ENCODE measurements at regions of chr1 and their contacts with region 1.

Region 1: GRCh38 chr1:181905944-181906597 is 155.4 kb downstream of the ZNF648 start:
- DNase-seq: no peak
- ATAC-seq: no peak
- H3K4me3 ChIP-seq: no peak overlapping the region
- H3K27ac ChIP-seq: no peak overlapping the region
- H3K4me1 ChIP-seq: no peaks in the 10 kb centered on the region
- H3K27me3 ChIP-seq: peaks cover 0 to 7% of the 10 kb centered on the region in 2 experiments; a peak in 1 of 4 replicates
- CTCF ChIP-seq: no peak
- EP300 ChIP-seq: no peak
- POLR2A ChIP-seq: no peak
- RAD21 ChIP-seq: no peak

Region 2: GRCh38 chr1:181743878-181744312 is 162.2 kb before region 1 on chr1:
- CTCF ChIA-PET with region 1: no interaction called
- POLR2A ChIA-PET with region 1: no interaction called
- RAD21 ChIA-PET with region 1: no interaction called
- SMC1A ChIA-PET with region 1: no interaction called
- in situ Hi-C with region 1: no loop called
- intact Hi-C with region 1: no loop called
- DNase-seq: no peak
- ATAC-seq: no peak
- H3K4me3 ChIP-seq: no peak overlapping the region
- H3K27ac ChIP-seq: no peak overlapping the region
- H3K4me1 ChIP-seq: no peaks in the 10 kb centered on the region
- H3K27me3 ChIP-seq: no peaks in the 10 kb centered on the region
- CTCF ChIP-seq: no peak
- EP300 ChIP-seq: no peak
- POLR2A ChIP-seq: no peak
- RAD21 ChIP-seq: no peak

Region 3: GRCh38 chr1:181969902-181970301 is 63.8 kb after region 1 on chr1:
- CTCF ChIA-PET with region 1: no interaction called
- POLR2A ChIA-PET with region 1: no interaction called
- RAD21 ChIA-PET with region 1: no interaction called
- SMC1A ChIA-PET with region 1: interaction called, 3 read pairs
- in situ Hi-C with region 1: no loop called
- intact Hi-C with region 1: loop called (anchors 10 kb)
- DNase-seq: no peak
- ATAC-seq: no peak
- H3K4me3 ChIP-seq: no peak overlapping the region
- H3K27ac ChIP-seq: no peak overlapping the region
- H3K4me1 ChIP-seq: no peaks in the 10 kb centered on the region
- H3K27me3 ChIP-seq: no peaks in the 10 kb centered on the region
- CTCF ChIP-seq: no peak
- EP300 ChIP-seq: no peak
- POLR2A ChIP-seq: no peak
- RAD21 ChIP-seq: no peak

Region 4: GRCh38 chr1:181989261-181989920 is 83.3 kb after region 1 on chr1:
- CTCF ChIA-PET with region 1: no interaction called
- POLR2A ChIA-PET with region 1: no interaction called
- RAD21 ChIA-PET with region 1: no interaction called
- SMC1A ChIA-PET with region 1: no interaction called
- in situ Hi-C with region 1: no loop called
- intact Hi-C with region 1: no loop called
- DNase-seq: no peak
- ATAC-seq: no peak
- H3K4me3 ChIP-seq: no peak overlapping the region
- H3K27ac ChIP-seq: no peak overlapping the region
- H3K4me1 ChIP-seq: no peaks in the 10 kb centered on the region
- H3K27me3 ChIP-seq: peaks cover 0 to 2% of the 10 kb centered on the region in 2 experiments; a peak in 1 of 4 replicates
- CTCF ChIP-seq: no peak
- EP300 ChIP-seq: no peak
- POLR2A ChIP-seq: no peak
- RAD21 ChIP-seq: no peak